CD4-positive, alpha-beta memory T cell (primary cell): ENCODE measurements at regions of chr10 and their contacts with region 1.

Region 1: GRCh38 chr10:117216611-117217195 is 19.4 kb downstream of the KCNK18 start:
- DNase-seq: peak in 4 of 5 donors; percentile 52 to 63 (median 60)
- H3K4me3 ChIP-seq: peak overlapping the region; percentile 42 to 72
- H3K4me3 Mint-ChIP-seq: peak overlapping the region; percentile 70 to 81 (median 77)
- H3K27ac ChIP-seq: no peak overlapping the region
- H3K27ac Mint-ChIP-seq: no peak overlapping the region
- H3K4me1 ChIP-seq: peaks cover 12% of the 10 kb centered on the region
- H3K4me1 Mint-ChIP-seq: peaks cover 1 to 11% (median 8%) of the 10 kb centered on the region in 4 donors
- H3K27me3 ChIP-seq: peaks cover 4% of the 10 kb centered on the region
- H3K27me3 Mint-ChIP-seq: peaks cover 9 to 20% of the 10 kb centered on the region in 2 donors

Region 2: DNA sequence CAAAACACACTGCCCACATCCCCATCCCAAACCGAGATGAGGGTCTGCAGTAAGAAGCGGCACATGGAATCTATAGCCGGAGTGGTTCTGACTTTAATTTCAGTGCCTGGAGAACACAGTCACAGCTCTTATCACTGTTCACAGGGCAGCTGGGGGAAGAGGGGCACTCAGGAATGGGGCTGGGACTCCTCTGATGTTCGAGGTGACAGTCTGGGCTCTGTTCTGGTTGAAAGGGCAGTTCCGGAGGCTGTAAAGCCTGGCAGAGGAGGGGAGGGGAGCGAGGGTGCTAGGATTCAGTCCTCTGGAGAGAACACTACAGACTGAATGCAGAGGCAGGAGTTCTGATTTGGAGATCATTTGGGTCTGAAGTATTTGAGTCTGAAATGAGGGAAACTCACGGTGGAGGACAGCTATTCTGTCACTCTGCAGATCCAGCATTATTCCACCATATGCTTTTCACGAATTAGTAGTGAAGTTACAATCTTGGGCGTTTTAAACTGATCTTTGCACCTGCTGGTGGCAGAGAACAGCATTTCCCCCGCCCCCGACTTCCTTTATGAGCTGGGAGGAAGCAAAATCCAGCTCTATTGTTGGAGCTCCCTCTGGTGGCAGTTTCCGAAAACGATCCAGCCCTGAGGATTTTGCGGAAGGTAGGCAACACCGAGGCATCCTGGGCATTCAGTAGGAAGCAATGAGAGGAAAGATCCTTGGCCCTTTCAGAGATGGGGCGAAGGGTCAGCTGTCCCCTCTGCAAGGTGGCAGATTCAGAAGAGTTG is 42.1 kb before region 1 on chr10:
- CTCF ChIA-PET with region 1: interaction called, 23 read pairs
- POLR2A ChIA-PET with region 1: no interaction called
- intact Hi-C with region 1: no loop called
- DNase-seq: peak; percentile 78 to 82 (median 81)
- H3K4me3 ChIP-seq: peak overlapping the region; percentile 49 to 61
- H3K4me3 Mint-ChIP-seq: peak overlapping the region; percentile 89 to 98 (median 94)
- H3K27ac ChIP-seq: no peak overlapping the region
- H3K27ac Mint-ChIP-seq: peak overlapping the region in 6 of 7 donors; percentile 31 to 85 (median 65)
- H3K4me1 ChIP-seq: peaks cover 7% of the 10 kb centered on the region
- H3K4me1 Mint-ChIP-seq: peaks cover 9 to 22% (median 14%) of the 10 kb centered on the region in 4 donors
- H3K27me3 ChIP-seq: peaks cover 14% of the 10 kb centered on the region
- H3K27me3 Mint-ChIP-seq: peaks cover 29 to 33% of the 10 kb centered on the region in 2 donors

Region 3: GRCh38 chr10:117226824-117227451 is 10.2 kb after region 1 on chr10:
- CTCF ChIA-PET with region 1: interaction called, 25 read pairs
- POLR2A ChIA-PET with region 1: no interaction called
- intact Hi-C with region 1: no loop called
- DNase-seq: no peak
- H3K4me3 ChIP-seq: no peak overlapping the region
- H3K4me3 Mint-ChIP-seq: no peak overlapping the region
- H3K27ac ChIP-seq: no peak overlapping the region
- H3K27ac Mint-ChIP-seq: no peak overlapping the region
- H3K4me1 ChIP-seq: no peaks in the 10 kb centered on the region
- H3K4me1 Mint-ChIP-seq: no peaks in the 10 kb centered on the region
- H3K27me3 ChIP-seq: no peaks in the 10 kb centered on the region
- H3K27me3 Mint-ChIP-seq: peaks cover 19 to 29% of the 10 kb centered on the region in 2 donors

Region 4: GRCh38 chr10:117375360-117376178 is 158.9 kb after region 1 on chr10 and contains the start of gene PDZD8:
- CTCF ChIA-PET with region 1: interaction called, 3 read pairs
- POLR2A ChIA-PET with region 1: interaction called, 3 read pairs
- intact Hi-C with region 1: loop called (anchors 5 kb)
- DNase-seq: peak; percentile 86 to 90 (median 88)
- H3K4me3 ChIP-seq: peak within 1 kb of the TSS; percentile 64 to 98
- H3K4me3 Mint-ChIP-seq: peak within 1 kb of the TSS; percentile 95 to 97 (median 96)
- H3K27ac ChIP-seq: peak within 1 kb of the TSS; percentile 61
- H3K27ac Mint-ChIP-seq: peak within 1 kb of the TSS; percentile 92 to 98 (median 94)
- H3K4me1 ChIP-seq: peaks cover 29% of the 10 kb centered on the region
- H3K4me1 Mint-ChIP-seq: peaks cover 19 to 44% (median 33%) of the 10 kb centered on the region in 4 donors
- H3K27me3 ChIP-seq: peaks cover 3% of the 10 kb centered on the region
- H3K27me3 Mint-ChIP-seq: peaks cover 6 to 19% of the 10 kb centered on the region in 2 donors
- total RNA-seq, gene PDZD8: 13.9 to 15.0 TPM

Region 5: GRCh38 chr10:117442944-117443685 is 226.4 kb after region 1 on chr10:
- CTCF ChIA-PET with region 1: interaction called, 7 read pairs
- POLR2A ChIA-PET with region 1: no interaction called
- intact Hi-C with region 1: loop called (anchors 5 kb)
- DNase-seq: peak; percentile 5 to 43 (median 18)
- H3K4me3 ChIP-seq: no peak overlapping the region
- H3K4me3 Mint-ChIP-seq: peak overlapping the region in 3 of 8 donors; percentile 30 to 66 (median 62)
- H3K27ac ChIP-seq: no peak overlapping the region
- H3K27ac Mint-ChIP-seq: no peak overlapping the region
- H3K4me1 ChIP-seq: no peaks in the 10 kb centered on the region
- H3K4me1 Mint-ChIP-seq: peaks cover 0 to 5% (median 0%) of the 10 kb centered on the region in 4 donors
- H3K27me3 ChIP-seq: no peaks in the 10 kb centered on the region
- H3K27me3 Mint-ChIP-seq: peaks cover 15 to 23% of the 10 kb centered on the region in 2 donors

Region 6: DNA sequence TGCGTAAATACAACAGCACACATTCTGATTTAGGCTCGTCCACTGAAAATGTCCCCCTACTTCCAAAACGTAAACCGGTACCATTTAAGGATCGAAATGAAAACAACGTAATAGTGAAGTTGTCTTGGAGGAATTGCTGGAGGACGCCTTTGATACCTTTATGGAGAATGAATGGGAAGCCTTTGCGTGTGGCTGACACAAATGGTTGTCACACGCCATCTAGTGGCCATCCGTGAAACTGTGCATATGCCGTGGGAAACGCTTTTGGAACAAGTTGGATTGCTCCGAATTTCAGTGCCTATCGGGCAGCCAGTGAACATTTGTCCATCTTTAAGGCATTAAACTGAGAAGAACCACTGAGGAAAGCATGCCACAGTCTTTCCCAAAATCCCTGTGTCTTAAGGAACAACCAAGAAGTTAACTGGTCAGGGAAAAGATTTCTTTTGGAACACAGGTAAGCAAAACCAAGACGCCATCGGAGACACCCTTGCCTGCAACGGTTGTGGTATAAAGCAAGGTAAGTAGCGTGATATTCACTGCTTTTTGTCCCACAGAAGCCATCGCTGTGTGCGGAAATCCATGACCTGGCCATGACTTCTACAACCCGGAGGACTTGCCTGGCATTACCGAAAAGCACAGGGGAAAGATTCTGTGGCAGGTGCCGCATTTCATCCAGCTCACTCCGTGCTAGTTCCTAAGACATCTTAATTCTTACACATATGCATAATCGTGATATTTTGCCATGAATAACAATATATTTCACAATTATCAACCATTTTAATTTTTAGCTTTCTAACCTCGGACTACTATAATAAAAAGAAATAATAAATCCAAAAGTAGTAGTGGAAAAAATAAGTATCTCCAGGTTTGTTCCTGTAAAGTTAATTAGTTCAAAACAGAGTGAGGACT is 1024.8 kb after region 1 on chr10:
- CTCF ChIA-PET with region 1: interaction called, 11 read pairs
- POLR2A ChIA-PET with region 1: no interaction called
- intact Hi-C with region 1: no loop called
- DNase-seq: peak in 4 of 5 donors; percentile 32 to 55 (median 46)
- H3K4me3 ChIP-seq: no peak overlapping the region
- H3K4me3 Mint-ChIP-seq: no peak overlapping the region
- H3K27ac ChIP-seq: no peak overlapping the region
- H3K27ac Mint-ChIP-seq: no peak overlapping the region
- H3K4me1 ChIP-seq: no peaks in the 10 kb centered on the region
- H3K4me1 Mint-ChIP-seq: peaks cover 0 to 1% (median 0%) of the 10 kb centered on the region in 4 donors
- H3K27me3 ChIP-seq: peaks cover 10% of the 10 kb centered on the region
- H3K27me3 Mint-ChIP-seq: peaks cover 30 to 40% of the 10 kb centered on the region in 2 donors